ENCODE measurements at regions of chr1 and their contacts with region 1.

Region 1: DNA sequence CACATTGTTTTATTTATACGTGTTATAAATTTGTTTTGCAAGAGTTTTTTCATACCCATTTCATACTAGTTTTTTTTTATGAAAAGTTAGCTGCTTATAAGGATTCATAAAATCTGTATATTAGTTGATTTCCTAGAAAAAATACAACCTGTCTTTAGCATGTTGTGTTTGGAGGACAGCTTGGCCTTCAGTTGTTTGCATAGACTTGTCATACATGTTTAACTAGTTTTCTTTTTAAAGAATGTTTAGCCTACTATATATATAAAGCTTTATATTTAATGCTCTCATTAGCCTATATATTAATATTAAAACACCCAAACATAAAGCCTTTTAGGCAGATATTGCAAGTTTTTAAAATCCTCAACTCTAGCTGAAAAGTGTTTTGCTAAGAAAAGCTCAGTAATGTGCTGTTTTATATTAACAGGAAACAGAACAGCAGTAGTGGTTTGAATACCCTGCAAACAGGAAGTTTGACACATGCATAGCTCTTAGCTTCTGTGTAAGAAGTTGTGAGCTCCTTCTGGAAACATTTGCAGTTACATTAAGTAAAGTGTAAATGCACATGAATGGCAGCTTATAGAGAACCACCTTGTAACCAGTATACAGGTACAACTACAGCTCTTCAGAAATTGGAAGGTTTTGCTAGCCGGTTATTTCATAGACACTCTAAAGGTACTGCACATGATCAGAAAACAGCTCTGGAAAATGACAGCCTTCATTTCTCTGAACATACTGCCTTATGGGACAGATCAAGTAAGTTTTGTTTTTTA is at the start of gene PRKACB:
- DNase-seq: peak; percentile 63
- ATAC-seq: peak; percentile 70
- H3K4me3 ChIP-seq: no peak within 1 kb of the TSS; the same call in 1 of the 2 replicates
- H3K27ac ChIP-seq: peak within 1 kb of the TSS; percentile 77
- H3K4me1 ChIP-seq: peaks cover 39% of the 10 kb centered on the region
- H3K27me3 ChIP-seq: no peaks in the 10 kb centered on the region
- CTCF ChIP-seq: no peak
- total RNA-seq, gene PRKACB: 7.8 and 8.3 TPM in 2 replicates

Region 2: DNA sequence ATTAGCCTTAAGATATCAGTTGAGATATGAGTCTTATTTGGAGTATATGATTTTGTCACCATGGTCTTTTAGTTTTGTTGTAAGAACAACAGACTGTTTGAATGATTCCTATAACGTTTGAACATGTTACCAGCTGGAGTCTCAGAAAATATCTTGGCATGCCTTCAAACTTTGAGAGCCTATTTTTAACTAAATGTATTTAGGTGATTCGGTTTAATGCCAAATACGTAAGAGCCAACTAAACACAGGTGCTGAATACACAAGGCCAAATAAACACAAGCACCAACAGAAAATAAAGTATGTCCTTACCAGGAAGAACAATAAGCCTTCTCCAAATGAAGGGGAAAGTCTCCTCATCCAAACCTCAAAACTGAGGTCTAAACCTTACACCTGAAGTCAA is 48.7 kb after region 1 on chr1:
- CTCF ChIA-PET with region 1: no interaction called
- POLR2A ChIA-PET with region 1: no interaction called
- intact Hi-C with region 1: loop called (anchors 5 kb)
- DNase-seq: no peak
- ATAC-seq: no peak
- H3K4me3 ChIP-seq: no peak overlapping the region
- H3K27ac ChIP-seq: no peak overlapping the region
- H3K4me1 ChIP-seq: no peaks in the 10 kb centered on the region
- H3K27me3 ChIP-seq: no peaks in the 10 kb centered on the region
- CTCF ChIP-seq: no peak

Region 3: GRCh38 chr1:84298328-84298683 is 154.3 kb after region 1 on chr1:
- CTCF ChIA-PET with region 1: no interaction called
- POLR2A ChIA-PET with region 1: interaction called, 5 read pairs
- intact Hi-C with region 1: loop called (anchors 2 kb)
- DNase-seq: peak; percentile 47
- ATAC-seq: peak; percentile 67
- H3K4me3 ChIP-seq: peak overlapping the region; percentile 82
- H3K27ac ChIP-seq: peak overlapping the region; percentile 80
- H3K4me1 ChIP-seq: peaks cover 49% of the 10 kb centered on the region
- H3K27me3 ChIP-seq: no peaks in the 10 kb centered on the region
- CTCF ChIP-seq: no peak

Region 4: GRCh38 chr1:84506002-84506728 is 362.2 kb after region 1 on chr1 and contains the starts of genes GNG5 and SPATA1:
- CTCF ChIA-PET with region 1: no interaction called
- POLR2A ChIA-PET with region 1: no interaction called
- intact Hi-C with region 1: loop called (anchors 5 kb)
- DNase-seq: peak; percentile 96
- ATAC-seq: peak; percentile 81
- H3K4me3 ChIP-seq: peak within 1 kb of the TSS; percentile 83
- H3K27ac ChIP-seq: peak within 1 kb of the TSS; percentile 94
- H3K4me1 ChIP-seq: peaks cover 26% of the 10 kb centered on the region
- H3K27me3 ChIP-seq: no peaks in the 10 kb centered on the region
- CTCF ChIP-seq: no peak
- total RNA-seq, gene GNG5: 39.9 and 49.9 TPM in 2 replicates
- total RNA-seq, gene SPATA1: 2.9 TPM in 1 of 2 replicates, not detected in the other

Region 5: GRCh38 chr1:84620720-84621313 is 476.8 kb after region 1 on chr1:
- CTCF ChIA-PET with region 1: no interaction called
- POLR2A ChIA-PET with region 1: no interaction called
- intact Hi-C with region 1: loop called (anchors 5 kb)
- DNase-seq: peak; percentile 84
- ATAC-seq: peak; percentile 83
- H3K4me3 ChIP-seq: peak overlapping the region; percentile 81
- H3K27ac ChIP-seq: peak overlapping the region; percentile 84
- H3K4me1 ChIP-seq: peaks cover 24% of the 10 kb centered on the region
- H3K27me3 ChIP-seq: no peaks in the 10 kb centered on the region
- CTCF ChIP-seq: peak; percentile 98

Region 6: GRCh38 chr1:84936116-84936810 is 792.3 kb after region 1 on chr1:
- CTCF ChIA-PET with region 1: no interaction called
- POLR2A ChIA-PET with region 1: no interaction called
- intact Hi-C with region 1: loop called (anchors 5 kb)
- DNase-seq: peak; percentile 81
- ATAC-seq: peak; percentile 55
- H3K4me3 ChIP-seq: no peak overlapping the region
- H3K27ac ChIP-seq: 0 out of 2 replicates have a peak overlapping the region, but pooled peaks have one; percentile 4
- H3K4me1 ChIP-seq: peaks cover 32% of the 10 kb centered on the region
- H3K27me3 ChIP-seq: no peaks in the 10 kb centered on the region
- CTCF ChIP-seq: peak; percentile 95